ENCODE measurements at regions of chr12 and their contacts with region 1.

Region 1: DNA sequence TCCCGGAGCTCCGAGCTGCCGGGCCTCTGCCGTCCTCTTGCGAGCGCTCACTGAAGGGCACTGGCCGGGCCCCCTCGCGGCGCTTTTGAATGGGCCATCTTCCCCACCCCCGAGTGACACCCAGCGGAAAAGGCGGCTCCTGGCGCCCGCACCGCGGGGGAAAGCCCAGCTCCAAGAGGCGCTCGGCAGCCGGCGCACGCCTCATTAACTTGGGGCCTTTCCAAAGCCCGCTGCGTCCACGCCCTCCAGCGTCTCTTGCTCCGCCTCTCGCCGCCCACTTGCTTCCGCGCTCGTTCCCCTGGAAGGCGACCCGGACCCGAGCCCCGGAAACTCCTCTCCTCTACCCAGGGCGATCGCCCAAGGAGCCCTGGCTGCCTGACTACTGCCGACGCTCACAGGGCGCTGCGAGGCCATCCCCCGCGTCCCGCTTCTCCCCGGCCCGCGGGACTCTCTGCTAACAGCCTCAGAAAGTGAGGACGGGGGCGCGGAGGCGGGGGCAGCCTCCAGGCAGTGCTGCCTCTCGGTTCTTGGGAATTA is at the start of gene PHLDA1:
- DNase-seq: peak; percentile 91
- ATAC-seq: peak; percentile 84
- H3K4me3 Mint-ChIP-seq: peak within 1 kb of the TSS; percentile 92
- H3K27ac Mint-ChIP-seq: peak within 1 kb of the TSS; percentile 93
- H3K4me1 Mint-ChIP-seq: peaks cover 29% of the 10 kb centered on the region
- H3K27me3 Mint-ChIP-seq: peaks cover 9% of the 10 kb centered on the region
- total RNA-seq, gene PHLDA1: 5.2 to 5.8 TPM

Region 2: GRCh38 chr12:76020731-76021672 is 10.6 kb before region 1 on chr12:
- POLR2A ChIA-PET with region 1: interaction called, 44 read pairs
- DNase-seq: peak; percentile 39
- ATAC-seq: peak; percentile 77
- H3K4me3 Mint-ChIP-seq: peak overlapping the region; percentile 61
- H3K27ac Mint-ChIP-seq: peak overlapping the region; percentile 93
- H3K4me1 Mint-ChIP-seq: peaks cover 36% of the 10 kb centered on the region
- H3K27me3 Mint-ChIP-seq: no peaks in the 10 kb centered on the region